Colonic mucosa (tissue), 4 donors: ENCODE measurements at regions of chr13 and their contacts with region 1.

Region 1: DNA sequence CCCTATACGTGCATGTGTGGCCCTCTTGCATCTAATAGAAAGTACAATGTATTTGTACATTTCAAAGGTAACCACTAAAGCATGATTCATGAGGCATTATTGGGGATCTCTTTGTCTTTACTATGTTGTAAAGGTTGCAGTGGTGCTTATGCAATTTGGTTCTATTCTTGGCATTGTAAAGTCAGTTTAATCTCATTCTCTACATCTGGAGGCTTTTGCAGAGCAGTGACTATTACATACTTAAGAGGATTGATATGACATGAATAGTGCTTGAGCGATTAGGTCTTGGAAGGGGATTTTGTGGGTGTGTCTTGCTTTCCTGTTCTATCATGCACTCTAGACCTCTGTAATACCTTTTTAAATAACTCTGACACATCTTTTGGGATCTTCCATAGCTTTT is 610.0 kb downstream of the EFNB2 start:
- DNase-seq: no peak
- H3K4me3 ChIP-seq: no peak overlapping the region
- H3K27ac ChIP-seq: no peak overlapping the region
- H3K4me1 ChIP-seq: no peaks in the 10 kb centered on the region
- H3K27me3 ChIP-seq: no peaks in the 10 kb centered on the region
- CTCF ChIP-seq: no peak

Region 2: GRCh38 chr13:105960326-105960725 is 34.8 kb after region 1 on chr13:
- intact Hi-C with region 1: loop called (anchors 5 kb)
- DNase-seq: no peak
- H3K4me3 ChIP-seq: no peak overlapping the region
- H3K27ac ChIP-seq: no peak overlapping the region
- H3K4me1 ChIP-seq: no peaks in the 10 kb centered on the region
- H3K27me3 ChIP-seq: no peaks in the 10 kb centered on the region
- CTCF ChIP-seq: no peak